SK-N-SH (cell line): ENCODE measurements at regions of chr11 and their contacts with region 1.

Region 1: DNA sequence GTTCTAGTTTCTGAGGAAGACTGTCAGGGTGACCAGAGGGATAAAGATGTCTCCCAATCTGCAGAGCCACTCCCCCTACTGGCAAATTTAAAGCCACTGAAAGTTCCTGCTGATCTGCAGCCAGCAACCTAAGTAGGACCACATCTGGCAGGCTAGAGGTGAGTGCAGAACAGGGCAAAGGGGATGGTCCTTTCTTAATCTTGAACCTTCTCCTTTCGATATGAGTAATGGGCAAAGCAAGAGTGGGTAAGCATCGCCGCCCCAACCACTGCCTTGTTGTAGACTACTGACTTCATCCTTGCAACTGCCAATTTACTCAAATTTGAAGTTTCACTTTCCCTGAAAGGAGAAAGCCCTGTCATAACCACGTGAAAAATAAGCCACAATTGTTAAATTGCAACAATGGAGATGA is 30.7 kb downstream of the SCUBE2 start:
- DNase-seq: no peak
- H3K4me3 ChIP-seq: no peak overlapping the region
- H3K27ac ChIP-seq: no peak overlapping the region
- H3K4me1 ChIP-seq: peaks cover 0 to 4% of the 10 kb centered on the region in 2 experiments; a peak in 1 of 4 replicates
- H3K27me3 ChIP-seq: no peaks in the 10 kb centered on the region
- CTCF ChIP-seq: peak; percentile 18; the same call in 1 of the 2 replicates
- EP300 ChIP-seq: no peak
- RAD21 ChIP-seq: no peak

Region 2: GRCh38 chr11:9046481-9046880 is 14.2 kb before region 1 on chr11:
- CTCF ChIA-PET with region 1: interaction called, 11 read pairs
- POLR2A ChIA-PET with region 1: no interaction called
- DNase-seq: no peak
- H3K4me3 ChIP-seq: no peak overlapping the region
- H3K27ac ChIP-seq: no peak overlapping the region
- H3K4me1 ChIP-seq: no peaks in the 10 kb centered on the region; a peak in 1 of 4 replicates
- H3K27me3 ChIP-seq: no peaks in the 10 kb centered on the region
- CTCF ChIP-seq: no peak
- EP300 ChIP-seq: no peak
- RAD21 ChIP-seq: no peak

Region 3: DNA sequence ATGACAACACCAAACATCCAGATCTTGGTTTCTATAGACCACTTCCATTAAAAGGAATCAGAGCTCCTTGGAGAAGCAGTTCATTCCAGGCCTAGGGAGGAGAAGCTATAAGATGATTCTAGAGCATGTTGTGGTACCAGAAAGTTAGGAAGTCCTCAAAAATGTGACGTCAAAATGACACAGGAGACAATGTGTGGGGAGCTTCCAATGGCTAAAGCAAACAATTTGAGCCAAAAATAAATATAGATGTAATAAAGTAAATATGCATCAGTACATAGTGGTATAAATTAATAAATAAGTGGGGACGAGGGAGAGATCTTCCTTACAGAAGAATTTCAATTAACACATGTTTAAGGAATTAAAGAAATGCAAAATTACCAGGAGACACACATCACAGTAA is 23.3 kb after region 1 on chr11:
- CTCF ChIA-PET with region 1: no interaction called
- POLR2A ChIA-PET with region 1: no interaction called
- DNase-seq: no peak
- H3K4me3 ChIP-seq: no peak overlapping the region
- H3K27ac ChIP-seq: no peak overlapping the region
- H3K4me1 ChIP-seq: no peaks in the 10 kb centered on the region
- H3K27me3 ChIP-seq: no peaks in the 10 kb centered on the region
- CTCF ChIP-seq: no peak
- EP300 ChIP-seq: no peak
- RAD21 ChIP-seq: no peak

Region 4: DNA sequence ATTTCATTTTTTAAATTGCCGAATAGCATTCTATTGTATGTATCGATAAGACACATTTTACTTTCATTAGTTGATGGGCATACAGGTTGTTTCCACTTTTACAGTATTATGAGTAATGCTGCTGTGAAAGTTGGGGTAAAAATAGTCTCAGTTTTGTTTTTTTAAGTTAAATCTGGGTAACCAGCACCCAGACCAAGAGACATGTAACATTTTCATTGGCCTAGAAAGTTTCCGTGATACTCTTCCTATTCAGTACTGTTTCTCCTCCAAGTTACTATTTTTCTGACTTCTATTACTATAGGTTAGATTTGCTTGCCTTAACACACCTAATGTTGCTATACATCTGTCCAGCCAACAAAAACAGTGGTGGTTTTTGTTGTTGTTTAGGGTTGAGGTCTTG is 336.0 kb after region 1 on chr11:
- CTCF ChIA-PET with region 1: no interaction called
- POLR2A ChIA-PET with region 1: no interaction called
- DNase-seq: no peak
- H3K4me3 ChIP-seq: no peak overlapping the region
- H3K27ac ChIP-seq: no peak overlapping the region
- H3K4me1 ChIP-seq: peaks cover 0 to 5% of the 10 kb centered on the region in 2 experiments; a peak in 2 of 4 replicates
- H3K27me3 ChIP-seq: no peaks in the 10 kb centered on the region
- CTCF ChIP-seq: no peak
- EP300 ChIP-seq: no peak
- RAD21 ChIP-seq: no peak